Aorta (tissue), 5 donors: ENCODE measurements at regions of chr7 and their contacts with region 1.

Region 1: GRCh38 chr7:94657771-94658693 is 2.1 kb upstream of the SGCE start:
- DNase-seq: peak; percentile 95
- ATAC-seq: peak; percentile 92
- H3K4me3 ChIP-seq: peak overlapping the region; percentile 9 to 10
- H3K27ac ChIP-seq: no peak overlapping the region
- H3K4me1 ChIP-seq: no peaks in the 10 kb centered on the region
- H3K27me3 ChIP-seq: no peaks in the 10 kb centered on the region

Region 2: GRCh38 chr7:94509879-94510581 is 148.0 kb before region 1 on chr7:
- intact Hi-C with region 1: loop called (anchors 5 to 10 kb)
- DNase-seq: peak; percentile 76 to 87
- ATAC-seq: peak; percentile 86
- H3K4me3 ChIP-seq: peak overlapping the region; percentile 31 to 79
- H3K27ac ChIP-seq: peak overlapping the region; percentile 38 to 84
- H3K4me1 ChIP-seq: peaks cover 0 to 8% of the 10 kb centered on the region in 2 donors
- H3K27me3 ChIP-seq: no peaks in the 10 kb centered on the region

Region 3: DNA sequence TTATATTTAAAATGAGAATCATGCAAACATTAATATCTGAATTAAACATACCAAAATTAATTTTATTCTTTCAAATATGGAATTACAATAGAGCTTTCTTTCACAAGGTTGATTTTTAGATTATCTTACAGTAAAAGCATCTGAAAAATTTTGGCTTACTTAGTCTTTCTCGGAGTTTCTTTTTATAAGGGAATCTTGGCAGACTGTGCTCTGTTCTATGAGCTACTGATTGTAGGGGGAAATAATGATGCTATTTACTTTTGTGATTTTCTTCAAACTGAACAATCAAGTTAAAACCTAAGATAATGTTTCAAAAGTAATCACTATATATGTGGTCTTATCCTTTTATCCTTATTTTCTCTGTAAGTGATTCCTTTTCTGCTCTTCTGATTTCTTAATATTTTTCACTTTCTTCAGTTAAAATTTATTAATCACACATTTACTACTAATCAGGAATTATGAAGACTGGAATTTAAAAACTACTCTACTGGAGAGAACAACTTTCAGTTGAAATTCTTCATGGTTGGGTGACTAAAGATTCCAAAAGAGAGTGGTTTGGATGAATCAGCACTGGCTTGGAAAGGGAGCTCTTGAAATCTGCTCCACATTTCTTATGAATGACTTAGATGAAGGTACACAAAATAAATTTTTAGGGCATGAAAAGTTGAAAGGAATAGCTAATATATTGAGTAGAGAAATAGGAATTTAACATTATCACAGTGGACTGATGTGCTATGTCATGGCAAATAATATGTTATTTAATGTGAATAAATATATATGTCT is 353.3 kb after region 1 on chr7:
- intact Hi-C with region 1: no loop called
- DNase-seq: no peak
- ATAC-seq: no peak
- H3K4me3 ChIP-seq: no peak overlapping the region
- H3K27ac ChIP-seq: no peak overlapping the region
- H3K4me1 ChIP-seq: no peaks in the 10 kb centered on the region
- H3K27me3 ChIP-seq: no peaks in the 10 kb centered on the region